Activated T-helper 1 cell treated with anti-CD3 and anti-CD28 coated beads, Interleukin-12 subunit alpha, Interleukin-12 subunit beta, Interleukin-2, Interleukin-4 antibody, amounts not matched to agents 30 ng/mL and 10 ng/mL and 1 ng/mL, durations not matched to agents 14 hours and 24 hours and 36 hours (primary cell): ENCODE measurements at regions of chr17 and their contacts with region 1.

Region 1: DNA sequence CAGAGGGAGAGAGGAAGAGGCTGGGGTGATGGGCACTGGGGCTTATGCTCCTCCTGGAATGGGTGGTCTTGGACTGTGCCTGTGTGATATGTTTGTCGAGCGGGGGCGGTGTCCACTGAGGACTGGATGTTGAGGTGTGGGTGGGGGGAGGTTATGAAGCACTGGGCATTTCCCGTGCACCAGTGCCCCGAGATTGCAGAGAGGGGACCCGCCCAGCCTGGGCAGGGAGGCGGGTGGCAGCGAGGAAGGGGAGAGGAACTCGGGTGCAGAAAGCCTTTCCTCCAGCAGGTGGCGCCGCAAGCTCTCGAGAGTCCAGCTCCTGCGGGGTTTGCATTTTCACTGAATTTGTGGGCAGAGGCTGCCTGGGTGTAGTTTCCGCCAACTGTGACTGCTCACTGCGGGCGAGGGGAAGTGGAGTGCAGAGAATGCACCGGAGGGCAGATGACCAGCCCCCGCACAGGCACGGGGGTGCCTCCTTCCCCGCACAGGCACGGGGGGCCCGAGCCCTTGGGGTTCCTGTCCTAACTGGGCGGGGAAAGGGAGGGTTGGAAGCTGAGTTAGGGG is 190.6 kb downstream of the SEC14L1 start:
- DNase-seq: peak; percentile 90
- H3K4me3 Mint-ChIP-seq: peak overlapping the region; percentile 73
- H3K27ac Mint-ChIP-seq: peak overlapping the region; percentile 86
- H3K4me1 Mint-ChIP-seq: peaks cover 42% of the 10 kb centered on the region
- H3K27me3 Mint-ChIP-seq: peaks cover 2% of the 10 kb centered on the region

Region 2: DNA sequence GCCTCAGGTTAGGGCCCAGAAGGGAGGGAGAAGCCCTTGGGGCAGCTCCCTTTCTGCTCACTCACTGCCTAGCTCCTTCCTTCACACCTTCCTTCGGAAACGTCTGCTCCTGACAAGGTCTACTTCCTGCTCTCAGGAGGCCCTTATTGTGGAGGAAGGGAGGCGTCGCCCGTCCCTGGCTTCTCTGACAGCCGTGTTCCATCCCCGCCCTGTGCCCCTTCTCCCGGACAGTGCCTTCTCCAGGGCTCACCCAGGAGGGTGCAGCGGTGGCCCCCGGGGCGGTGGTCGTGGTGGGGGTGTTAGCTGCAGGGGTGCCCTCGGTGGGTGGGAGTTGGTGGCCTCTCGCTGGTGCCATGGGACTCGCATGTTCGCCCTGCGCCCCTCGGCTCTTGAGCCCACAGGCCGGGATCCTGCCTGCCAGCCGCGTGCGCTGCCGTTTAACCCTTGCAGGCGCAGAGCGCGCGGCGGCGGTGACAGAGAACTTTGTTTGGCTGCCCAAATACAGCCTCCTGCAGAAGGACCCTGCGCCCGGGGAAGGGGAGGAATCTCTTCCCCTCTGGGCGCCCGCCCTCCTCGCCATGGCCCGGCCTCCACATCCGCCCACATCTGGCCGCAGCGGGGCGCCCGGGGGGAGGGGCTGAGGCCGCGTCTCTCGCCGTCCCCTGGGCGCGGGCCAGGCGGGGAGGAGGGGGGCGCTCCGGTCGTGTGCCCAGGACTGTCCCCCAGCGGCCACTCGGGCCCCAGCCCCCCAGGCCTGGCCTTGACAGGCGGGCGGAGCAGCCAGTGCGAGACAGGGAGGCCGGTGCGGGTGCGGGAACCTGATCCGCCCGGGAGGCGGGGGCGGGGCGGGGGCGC is 41.3 kb after region 1 on chr17:
- intact Hi-C with region 1: loop called (anchors 1 kb)
- DNase-seq: peak; percentile 76
- H3K4me3 Mint-ChIP-seq: peak overlapping the region; percentile 76
- H3K27ac Mint-ChIP-seq: peak overlapping the region; percentile 68
- H3K4me1 Mint-ChIP-seq: peaks cover 57% of the 10 kb centered on the region
- H3K27me3 Mint-ChIP-seq: no peaks in the 10 kb centered on the region

Region 3: GRCh38 chr17:77429919-77430752 is 98.8 kb after region 1 on chr17:
- intact Hi-C with region 1: loop called (anchors 1 kb)
- DNase-seq: peak; percentile 66
- H3K4me3 Mint-ChIP-seq: no peak overlapping the region
- H3K27ac Mint-ChIP-seq: peak overlapping the region; percentile 59
- H3K4me1 Mint-ChIP-seq: peaks cover 68% of the 10 kb centered on the region
- H3K27me3 Mint-ChIP-seq: no peaks in the 10 kb centered on the region

Region 4: GRCh38 chr17:77471984-77472461 is 140.6 kb after region 1 on chr17:
- intact Hi-C with region 1: loop called (anchors 1 kb)
- DNase-seq: no peak
- H3K4me3 Mint-ChIP-seq: peak overlapping the region; percentile 59
- H3K27ac Mint-ChIP-seq: peak overlapping the region; percentile 88
- H3K4me1 Mint-ChIP-seq: peaks cover 83% of the 10 kb centered on the region
- H3K27me3 Mint-ChIP-seq: no peaks in the 10 kb centered on the region

Region 5: GRCh38 chr17:77834170-77835115 is 503.1 kb after region 1 on chr17:
- intact Hi-C with region 1: loop called (anchors 1 kb)
- DNase-seq: peak; percentile 32
- H3K4me3 Mint-ChIP-seq: no peak overlapping the region
- H3K27ac Mint-ChIP-seq: no peak overlapping the region
- H3K4me1 Mint-ChIP-seq: peaks cover 26% of the 10 kb centered on the region
- H3K27me3 Mint-ChIP-seq: peaks cover 23% of the 10 kb centered on the region